ENCODE measurements at regions of chr5 and their contacts with region 1.

Region 1: GRCh38 chr5:95846554-95847260 is 24.2 kb upstream of the GLRX start:
- DNase-seq: peak; percentile 75
- H3K4me3 ChIP-seq: no peak overlapping the region
- H3K27ac ChIP-seq: no peak overlapping the region
- H3K4me1 ChIP-seq: peaks cover 0 to 12% (median 10%) of the 10 kb centered on the region in 4 donors
- H3K27me3 ChIP-seq: no peaks in the 10 kb centered on the region
- CTCF ChIP-seq: peak; percentile 89 to 96 (median 94)
- EP300 ChIP-seq: no peak
- POLR2A ChIP-seq: no peak

Region 2: DNA sequence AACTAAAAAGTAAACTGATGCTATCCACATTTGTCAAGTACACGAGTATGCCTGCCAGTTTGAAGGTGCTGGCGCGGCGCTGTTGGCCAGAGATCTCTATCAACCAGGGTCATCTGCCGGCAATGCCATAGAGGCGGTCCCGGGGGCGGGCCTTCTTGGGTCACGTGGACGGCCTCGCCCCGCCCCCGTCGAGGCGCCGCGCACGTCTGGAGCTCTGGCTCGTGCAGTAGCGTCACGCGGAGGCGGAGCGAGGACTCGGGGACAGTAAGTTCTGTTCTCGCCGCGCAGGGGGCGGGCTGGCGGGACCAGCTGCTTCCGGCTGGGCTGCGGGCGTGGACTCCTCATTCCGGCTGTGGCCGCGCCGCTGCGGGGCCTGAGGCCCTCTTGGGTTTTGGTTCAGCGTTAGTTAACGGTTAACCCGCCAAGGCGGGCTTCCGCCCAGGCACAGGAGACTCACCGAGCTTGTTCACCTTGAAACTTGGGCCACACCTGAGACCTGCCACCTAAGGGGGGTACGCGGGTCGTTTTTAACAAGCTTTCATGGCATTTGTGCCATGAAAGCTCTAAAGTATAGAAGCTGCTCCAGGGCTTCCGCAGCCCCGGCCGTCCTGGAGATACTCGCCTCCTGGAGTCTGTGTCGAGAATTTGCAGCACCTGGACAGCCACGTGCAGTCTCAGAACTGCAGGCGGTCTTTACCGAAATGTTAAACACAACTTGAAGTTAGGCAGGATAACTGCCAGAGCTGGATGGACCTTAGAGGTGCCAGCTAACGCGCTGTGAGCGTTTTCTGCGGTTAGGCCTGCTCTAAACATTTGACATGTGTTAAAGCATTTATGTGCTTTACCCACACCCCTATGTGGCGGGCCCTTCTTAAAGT is 199.9 kb before region 1 on chr5 and contains the start of gene RFESD:
- in situ Hi-C with region 1: no loop called
- intact Hi-C with region 1: loop called (anchors 10 kb)
- DNase-seq: peak; percentile 100
- H3K4me3 ChIP-seq: peak within 1 kb of the TSS; percentile 31 to 63 (median 40)
- H3K27ac ChIP-seq: peak within 1 kb of the TSS; percentile 96 to 98 (median 97)
- H3K4me1 ChIP-seq: peaks cover 10 to 27% (median 16%) of the 10 kb centered on the region in 4 donors
- H3K27me3 ChIP-seq: no peaks in the 10 kb centered on the region
- CTCF ChIP-seq: peak in 3 of 5 experiments; percentile 25 to 50 (median 44)
- EP300 ChIP-seq: peak; percentile 100
- POLR2A ChIP-seq: peak; percentile 97
- total RNA-seq, gene RFESD: 1.1 to 1.4 TPM in 2 of 4 donors, not detected in the others

Region 3: DNA sequence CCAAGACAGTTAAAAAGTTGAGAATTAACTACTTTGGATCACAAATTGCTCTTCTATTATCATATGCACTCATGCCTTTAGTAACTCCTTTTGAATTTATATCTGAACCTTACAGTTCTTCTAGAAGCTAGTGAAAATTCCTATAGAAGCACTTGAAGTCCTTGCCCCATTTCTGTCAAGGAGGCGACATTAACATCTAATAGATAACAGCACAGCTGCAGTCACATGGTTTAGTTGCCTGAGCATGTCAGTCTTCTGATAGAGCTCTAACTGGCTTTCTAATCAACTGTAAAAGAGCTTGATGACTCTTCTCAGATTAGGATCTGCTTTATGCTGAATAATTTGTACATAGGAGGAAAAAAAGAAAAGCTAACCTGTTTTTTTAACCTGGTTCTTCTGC is 191.1 kb before region 1 on chr5:
- in situ Hi-C with region 1: loop called (anchors 5 to 10 kb)
- intact Hi-C with region 1: no loop called
- DNase-seq: no peak
- H3K4me3 ChIP-seq: no peak overlapping the region
- H3K27ac ChIP-seq: no peak overlapping the region
- H3K4me1 ChIP-seq: no peaks in the 10 kb centered on the region
- H3K27me3 ChIP-seq: no peaks in the 10 kb centered on the region
- CTCF ChIP-seq: no peak
- EP300 ChIP-seq: no peak
- POLR2A ChIP-seq: no peak

Region 4: GRCh38 chr5:95664204-95664786 is 182.4 kb before region 1 on chr5:
- in situ Hi-C with region 1: loop called (anchors 5 to 10 kb)
- intact Hi-C with region 1: no loop called
- DNase-seq: peak; percentile 18
- H3K4me3 ChIP-seq: no peak overlapping the region
- H3K27ac ChIP-seq: peak overlapping the region in 2 of 4 donors; percentile 7 to 15
- H3K4me1 ChIP-seq: peaks cover 0 to 19% (median 3%) of the 10 kb centered on the region in 4 donors
- H3K27me3 ChIP-seq: no peaks in the 10 kb centered on the region
- CTCF ChIP-seq: peak; percentile 73 to 87 (median 77)
- EP300 ChIP-seq: no peak
- POLR2A ChIP-seq: no peak

Region 5: DNA sequence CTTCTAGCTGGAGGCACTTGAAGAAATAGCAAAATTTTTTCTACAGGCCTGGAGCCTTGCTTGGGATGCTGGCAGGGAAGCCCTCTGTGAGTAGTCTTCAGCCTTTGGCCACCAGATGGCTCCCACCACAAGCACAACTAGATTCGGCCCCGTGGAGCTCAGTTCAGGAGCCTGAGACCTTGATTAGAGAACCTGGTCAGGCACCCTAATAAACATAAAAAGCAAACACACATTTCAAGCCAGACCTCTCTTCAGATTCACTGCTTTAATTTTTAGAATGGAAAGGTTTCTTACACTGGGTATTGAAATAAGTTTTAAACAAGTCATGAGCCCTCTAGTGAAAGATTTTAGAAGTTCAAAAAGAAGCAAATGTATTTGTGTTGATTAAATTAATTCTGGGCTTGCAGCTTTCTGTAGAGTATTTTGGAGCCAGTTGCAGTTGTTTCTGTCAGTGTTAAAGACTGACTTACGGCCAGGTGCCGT is 65.6 kb before region 1 on chr5:
- in situ Hi-C with region 1: loop called in 3 of 4 experiments (anchors 5 kb)
- intact Hi-C with region 1: loop called (anchors 2 kb)
- DNase-seq: peak; percentile 86
- H3K4me3 ChIP-seq: no peak overlapping the region
- H3K27ac ChIP-seq: peak overlapping the region; percentile 19 to 65 (median 42)
- H3K4me1 ChIP-seq: peaks cover 0 to 13% (median 2%) of the 10 kb centered on the region in 4 donors
- H3K27me3 ChIP-seq: no peaks in the 10 kb centered on the region
- CTCF ChIP-seq: peak; percentile 76 to 96 (median 85)
- EP300 ChIP-seq: no peak
- POLR2A ChIP-seq: no peak

Measured in transverse colon (tissue), 4 donors.